ENCODE measurements at regions of chr4 and their contacts with region 1.

Region 1: GRCh38 chr4:75724066-75724866 is at the start of gene USO1:
- DNase-seq: peak; percentile 99
- H3K4me3 ChIP-seq: peak within 1 kb of the TSS; percentile 99
- H3K27ac ChIP-seq: peak within 1 kb of the TSS; percentile 100
- H3K27me3 ChIP-seq: no peaks in the 10 kb centered on the region
- CTCF ChIP-seq: peak; percentile 90
- polyA plus RNA-seq, gene USO1: 99.6 and 142 TPM in 2 replicates

Region 2: GRCh38 chr4:75633846-75634245 is 90.4 kb before region 1 on chr4:
- CTCF ChIA-PET with region 1: no interaction called
- POLR2A ChIA-PET with region 1: no interaction called
- DNase-seq: no peak
- H3K4me3 ChIP-seq: no peak overlapping the region
- H3K27ac ChIP-seq: no peak overlapping the region
- H3K27me3 ChIP-seq: peaks cover 3% of the 10 kb centered on the region
- CTCF ChIP-seq: no peak

Region 3: GRCh38 chr4:75653845-75654503 is 70.3 kb before region 1 on chr4:
- CTCF ChIA-PET with region 1: interaction called, 16 read pairs
- POLR2A ChIA-PET with region 1: interaction called, 12 read pairs
- DNase-seq: no peak
- H3K4me3 ChIP-seq: no peak overlapping the region
- H3K27ac ChIP-seq: no peak overlapping the region
- H3K27me3 ChIP-seq: no peaks in the 10 kb centered on the region
- CTCF ChIP-seq: peak; percentile 64

Region 4: GRCh38 chr4:75673027-75673958 is 51.0 kb before region 1 on chr4 and contains the start of gene G3BP2:
- CTCF ChIA-PET with region 1: interaction called, 20 read pairs
- POLR2A ChIA-PET with region 1: interaction called, 30 read pairs
- DNase-seq: peak; percentile 95
- H3K4me3 ChIP-seq: peak within 1 kb of the TSS; percentile 93
- H3K27ac ChIP-seq: peak within 1 kb of the TSS; percentile 89
- H3K27me3 ChIP-seq: no peaks in the 10 kb centered on the region
- CTCF ChIP-seq: no peak
- polyA plus RNA-seq, gene G3BP2: 139 and 179 TPM in 2 replicates

Region 5: DNA sequence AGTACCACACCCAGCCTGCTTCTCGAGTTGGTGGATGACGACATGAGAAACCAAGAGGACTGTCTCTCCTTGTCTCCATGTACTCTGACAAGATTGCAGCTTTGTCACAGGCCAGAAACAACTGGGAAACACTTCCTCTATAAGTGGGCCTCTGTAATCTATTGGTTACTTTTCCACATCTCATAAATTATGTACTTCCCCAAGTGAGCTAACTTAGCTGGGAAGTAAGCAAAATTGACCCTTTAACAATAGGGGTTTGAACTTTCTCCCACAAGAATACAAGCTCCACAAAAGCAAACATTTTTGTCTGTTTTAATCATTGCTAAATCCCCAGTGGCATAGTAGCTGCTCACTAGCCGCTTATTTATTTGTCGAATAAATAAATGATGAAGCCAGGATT is 14.0 kb before region 1 on chr4:
- CTCF ChIA-PET with region 1: interaction called, 36 read pairs
- POLR2A ChIA-PET with region 1: interaction called, 18 read pairs
- DNase-seq: no peak
- H3K4me3 ChIP-seq: no peak overlapping the region
- H3K27ac ChIP-seq: no peak overlapping the region
- H3K27me3 ChIP-seq: no peaks in the 10 kb centered on the region
- CTCF ChIP-seq: no peak

Region 6: GRCh38 chr4:75745161-75745560 is 20.9 kb after region 1 on chr4:
- CTCF ChIA-PET with region 1: interaction called, 19 read pairs
- POLR2A ChIA-PET with region 1: interaction called, 15 read pairs
- DNase-seq: peak; percentile 29
- H3K4me3 ChIP-seq: no peak overlapping the region
- H3K27ac ChIP-seq: no peak overlapping the region
- H3K27me3 ChIP-seq: no peaks in the 10 kb centered on the region
- CTCF ChIP-seq: no peak

Region 7: GRCh38 chr4:75844151-75844662 is 119.9 kb after region 1 on chr4:
- CTCF ChIA-PET with region 1: interaction called, 16 read pairs
- POLR2A ChIA-PET with region 1: interaction called, 8 read pairs
- DNase-seq: peak; percentile 88
- H3K4me3 ChIP-seq: no peak overlapping the region
- H3K27ac ChIP-seq: peak overlapping the region; percentile 96
- H3K27me3 ChIP-seq: no peaks in the 10 kb centered on the region
- CTCF ChIP-seq: no peak

Region 8: DNA sequence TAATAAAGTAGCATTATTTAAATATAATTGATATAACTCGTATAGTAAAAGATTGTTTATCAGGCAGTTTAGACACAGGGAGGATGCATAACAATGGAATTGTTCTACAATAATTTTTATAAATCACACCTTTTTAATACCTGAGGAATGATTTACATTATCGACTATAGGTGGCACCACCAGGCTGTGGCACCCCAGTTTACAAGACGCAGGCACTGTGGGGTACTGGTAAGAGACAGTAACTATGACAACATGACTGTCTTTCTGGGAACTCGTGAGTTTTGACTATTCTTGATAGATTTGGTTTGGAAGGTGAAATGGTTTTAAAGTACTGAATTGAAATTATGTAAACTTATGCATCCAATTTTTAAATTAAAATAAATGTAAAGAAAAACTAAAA is 555.2 kb after region 1 on chr4:
- CTCF ChIA-PET with region 1: no interaction called
- POLR2A ChIA-PET with region 1: no interaction called
- DNase-seq: no peak
- H3K4me3 ChIP-seq: no peak overlapping the region
- H3K27ac ChIP-seq: no peak overlapping the region
- H3K27me3 ChIP-seq: peaks cover 6% of the 10 kb centered on the region
- CTCF ChIP-seq: no peak